MCF 10A (cell line): ENCODE measurements at regions of chr7 and their contacts with region 1.

Region 1: DNA sequence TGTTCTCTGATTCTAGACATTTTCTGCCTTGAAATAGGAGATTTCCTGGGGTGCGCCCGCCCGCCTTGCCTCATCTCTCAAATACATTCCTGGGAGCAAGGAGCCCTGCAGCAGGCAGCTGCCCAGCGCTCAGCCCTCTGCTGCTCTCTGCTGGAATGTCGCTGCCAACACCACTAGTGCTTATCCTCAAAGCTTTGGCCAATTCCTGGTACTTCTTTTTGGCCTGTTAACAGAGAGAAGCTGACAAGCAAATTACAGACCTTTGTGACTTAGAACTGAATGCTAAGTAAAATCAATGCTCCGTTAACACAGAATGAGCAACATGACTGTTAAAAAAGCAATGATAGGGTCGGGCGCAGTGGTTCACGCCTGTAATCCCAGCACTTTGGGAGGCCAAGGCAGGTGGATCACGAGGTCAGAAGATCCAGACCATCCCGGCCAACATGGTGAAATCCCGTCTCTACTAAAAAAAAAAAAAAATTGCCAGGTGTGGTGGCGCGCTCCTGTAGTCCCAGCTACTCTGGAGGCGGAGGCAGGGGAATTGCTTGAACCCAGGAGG is 41.9 kb upstream of the SYPL1 start:
- DNase-seq: peak; percentile 86
- H3K4me3 Mint-ChIP-seq: no peak overlapping the region
- H3K27ac Mint-ChIP-seq: no peak overlapping the region
- H3K4me1 Mint-ChIP-seq: no peaks in the 10 kb centered on the region
- H3K27me3 Mint-ChIP-seq: peaks cover 18% of the 10 kb centered on the region
- CTCF ChIP-seq: peak; percentile 92

Region 2: DNA sequence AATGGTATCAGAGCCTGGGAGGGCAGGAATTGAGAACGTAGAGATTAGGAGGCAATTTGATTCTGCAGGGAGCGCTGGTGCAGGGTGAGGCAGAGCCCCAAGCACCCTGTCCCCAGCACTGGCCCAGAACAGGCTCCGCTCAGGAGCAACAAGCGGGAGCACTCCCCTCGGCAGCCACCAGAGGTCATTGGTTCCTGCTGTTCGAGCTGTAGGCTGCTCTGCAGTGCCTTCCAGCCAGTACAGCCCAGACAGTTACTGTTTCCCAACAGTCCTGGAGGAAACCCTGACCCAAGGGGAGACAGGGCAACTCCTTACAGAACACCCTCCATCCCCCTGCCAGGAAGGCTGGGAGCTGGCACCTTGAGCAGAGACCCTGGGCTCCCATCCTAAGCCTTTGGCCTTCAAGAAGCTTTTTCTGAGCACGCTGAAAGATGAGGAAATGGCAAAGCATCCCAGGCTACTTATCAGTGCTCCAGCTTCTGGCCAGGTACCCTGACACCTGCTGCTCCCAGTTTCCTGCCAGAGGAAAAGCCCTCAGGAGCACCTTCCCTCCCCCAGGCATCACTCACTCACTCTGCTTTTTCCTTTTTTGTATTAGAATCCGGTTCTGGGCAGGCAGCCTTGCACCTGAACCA is 501.5 kb before region 1 on chr7:
- CTCF ChIA-PET with region 1: interaction called, 4 read pairs
- POLR2A ChIA-PET with region 1: no interaction called
- intact Hi-C with region 1: loop called (anchors 5 kb)
- DNase-seq: peak; percentile 62
- H3K4me3 Mint-ChIP-seq: no peak overlapping the region
- H3K27ac Mint-ChIP-seq: no peak overlapping the region
- H3K4me1 Mint-ChIP-seq: peaks cover 10% of the 10 kb centered on the region
- H3K27me3 Mint-ChIP-seq: no peaks in the 10 kb centered on the region
- CTCF ChIP-seq: peak; percentile 79

Region 3: GRCh38 chr7:106041140-106041717 is 112.7 kb before region 1 on chr7:
- CTCF ChIA-PET with region 1: interaction called, 35 read pairs
- POLR2A ChIA-PET with region 1: no interaction called
- intact Hi-C with region 1: no loop called
- DNase-seq: peak; percentile 66
- H3K4me3 Mint-ChIP-seq: no peak overlapping the region
- H3K27ac Mint-ChIP-seq: no peak overlapping the region
- H3K4me1 Mint-ChIP-seq: peaks cover 13% of the 10 kb centered on the region
- H3K27me3 Mint-ChIP-seq: peaks cover 22% of the 10 kb centered on the region
- CTCF ChIP-seq: peak; percentile 59

Region 4: DNA sequence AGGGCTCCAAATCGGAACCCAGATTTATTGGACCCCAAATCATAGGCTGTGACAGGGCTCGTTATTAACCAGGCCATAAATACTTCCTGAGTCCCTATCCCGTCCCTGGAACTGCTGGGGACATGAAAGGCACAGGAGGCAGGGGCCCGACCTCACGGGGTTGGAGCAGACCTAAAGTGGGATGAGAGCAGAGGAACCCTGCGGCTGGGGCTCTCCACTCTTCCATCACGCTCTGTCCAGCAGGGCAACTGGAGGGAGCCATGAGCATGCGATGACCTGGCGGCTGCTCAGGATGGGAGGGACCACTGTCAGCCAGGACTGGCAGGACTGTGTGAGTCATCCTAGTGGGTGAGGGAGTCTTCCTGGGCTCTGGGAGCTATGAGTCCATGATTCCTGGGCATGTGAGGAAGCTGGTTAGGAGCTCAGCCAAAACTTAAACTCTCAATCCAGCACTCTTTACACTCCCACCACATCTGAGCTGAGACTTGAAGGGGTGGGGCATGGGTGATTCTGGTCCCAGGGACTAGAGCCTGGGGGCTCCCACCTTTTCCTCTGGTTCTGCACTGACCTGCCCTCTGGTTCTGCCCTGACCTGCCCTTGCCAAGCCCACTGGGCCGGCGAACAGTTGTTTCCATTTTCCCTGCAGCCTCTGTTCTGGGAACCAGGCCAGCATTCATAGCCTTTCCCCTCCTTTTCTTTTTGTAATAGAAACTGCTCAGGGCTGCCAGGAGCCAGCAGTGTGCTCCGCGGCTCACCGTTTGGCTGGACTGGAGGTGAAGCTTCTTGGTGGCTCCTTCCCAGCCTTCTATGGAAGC is 89.0 kb before region 1 on chr7:
- CTCF ChIA-PET with region 1: interaction called, 17 read pairs
- POLR2A ChIA-PET with region 1: interaction called, 29 read pairs
- intact Hi-C with region 1: no loop called
- DNase-seq: peak; percentile 99
- H3K4me3 Mint-ChIP-seq: peak overlapping the region; percentile 60
- H3K27ac Mint-ChIP-seq: peak overlapping the region; percentile 86
- H3K4me1 Mint-ChIP-seq: peaks cover 66% of the 10 kb centered on the region
- H3K27me3 Mint-ChIP-seq: no peaks in the 10 kb centered on the region
- CTCF ChIP-seq: no peak

Region 5: GRCh38 chr7:106112117-106112971 is 41.6 kb before region 1 on chr7 and contains the start of gene SYPL1:
- CTCF ChIA-PET with region 1: interaction called, 29 read pairs
- POLR2A ChIA-PET with region 1: interaction called, 38 read pairs
- intact Hi-C with region 1: loop called (anchors 1 kb)
- DNase-seq: peak; percentile 92
- H3K4me3 Mint-ChIP-seq: peak within 1 kb of the TSS; percentile 88
- H3K27ac Mint-ChIP-seq: peak within 1 kb of the TSS; percentile 95
- H3K4me1 Mint-ChIP-seq: peaks cover 23% of the 10 kb centered on the region
- H3K27me3 Mint-ChIP-seq: no peaks in the 10 kb centered on the region
- CTCF ChIP-seq: no peak
- total RNA-seq, gene SYPL1: 77.6 and 92.1 TPM in 2 replicates

Region 6: DNA sequence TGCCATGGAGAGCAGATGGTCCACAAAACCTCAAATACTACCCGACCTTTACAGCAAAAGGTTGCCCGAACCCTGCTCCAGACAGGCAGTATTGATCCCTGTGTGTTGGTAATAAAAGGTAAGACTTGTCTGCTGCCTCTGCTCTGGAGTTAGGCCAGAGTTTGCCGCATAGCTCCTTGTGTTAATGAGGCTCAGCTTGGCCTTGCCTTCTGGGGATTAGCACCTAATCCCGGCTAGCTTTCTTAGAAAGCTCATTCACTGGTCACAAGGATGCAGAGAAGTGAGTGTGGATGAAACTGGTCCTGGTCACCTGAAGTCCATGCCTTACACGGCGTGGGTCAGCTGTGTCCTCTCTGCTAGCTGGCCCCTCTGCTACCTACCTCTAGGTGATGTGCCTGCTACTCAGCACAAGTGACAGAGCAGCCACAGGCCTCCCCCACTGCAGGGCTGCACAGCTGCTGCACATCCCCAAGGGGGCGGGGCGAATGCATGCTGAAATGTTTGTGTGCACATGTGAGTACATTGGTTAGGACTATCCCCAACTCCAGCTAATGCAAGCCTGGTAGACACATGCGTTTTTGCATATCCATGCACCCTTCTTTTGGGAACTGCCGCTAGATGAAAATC is 10.1 kb before region 1 on chr7:
- CTCF ChIA-PET with region 1: interaction called, 13 read pairs
- POLR2A ChIA-PET with region 1: interaction called, 3 read pairs
- intact Hi-C with region 1: no loop called
- DNase-seq: no peak
- H3K4me3 Mint-ChIP-seq: no peak overlapping the region
- H3K27ac Mint-ChIP-seq: no peak overlapping the region
- H3K4me1 Mint-ChIP-seq: no peaks in the 10 kb centered on the region
- H3K27me3 Mint-ChIP-seq: no peaks in the 10 kb centered on the region
- CTCF ChIP-seq: no peak